H1 (cell line): ENCODE measurements at regions of chr1 and their contacts with region 1.

Region 1: DNA sequence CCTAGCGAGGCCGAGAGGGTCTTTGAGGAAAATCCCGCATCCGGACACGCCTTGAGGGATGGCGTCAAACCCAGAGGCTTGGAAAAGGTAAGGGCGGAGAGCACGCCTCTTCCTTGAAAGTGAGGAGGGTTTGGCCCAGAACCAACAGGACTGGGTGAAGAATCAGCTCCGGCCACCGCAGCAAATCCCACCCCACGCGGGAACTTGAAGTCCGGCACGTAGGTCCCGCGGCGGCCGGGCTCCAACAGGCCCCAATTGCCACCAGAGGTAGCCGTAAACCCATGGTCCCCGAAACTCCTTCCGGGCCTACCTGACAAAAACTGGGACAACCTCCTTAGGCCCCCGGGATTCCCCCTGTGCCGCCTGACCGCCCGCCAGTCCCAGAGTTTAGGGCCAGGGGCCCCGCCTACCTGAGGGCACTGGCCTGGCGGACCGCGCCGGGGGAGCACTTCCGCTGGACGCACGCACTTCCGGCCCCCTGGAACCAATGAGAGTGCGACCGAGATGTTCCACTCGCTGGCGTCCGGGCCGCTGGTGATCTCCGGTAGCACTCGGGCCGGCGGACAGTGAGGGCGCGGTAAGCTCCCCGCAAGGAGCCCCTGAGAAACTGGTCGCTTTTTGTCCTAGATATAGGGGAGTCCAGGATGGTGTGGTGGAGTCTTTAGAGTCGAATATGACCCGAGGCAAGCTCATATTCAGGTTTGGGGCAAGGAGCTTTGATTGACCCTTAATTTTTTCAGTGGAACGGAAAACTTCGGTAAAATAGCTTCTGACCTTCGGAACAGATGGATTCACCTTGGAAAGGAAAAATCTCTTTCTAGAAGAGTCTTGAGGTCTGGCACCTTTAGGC is at the starts of genes LZIC and NMNAT1:
- DNase-seq: peak; percentile 81 to 94
- H3K4me3 ChIP-seq: peak within 1 kb of the TSS; percentile 72 to 94 (median 88)
- H3K27ac ChIP-seq: peak within 1 kb of the TSS; percentile 76
- H3K4me1 ChIP-seq: no peaks in the 10 kb centered on the region
- H3K27me3 ChIP-seq: no peaks in the 10 kb centered on the region
- CTCF ChIP-seq: peak in 1 of 3 experiments; percentile 15; a peak in 1 of 4 replicates
- EP300 ChIP-seq: peak in 1 of 2 experiments; percentile 68; a peak in 1 of 3 replicates
- POLR2A ChIP-seq: peak; percentile 73 to 94
- RAD21 ChIP-seq: peak in 1 of 2 experiments; percentile 15; a peak in 1 of 4 replicates
- total RNA-seq, gene LZIC: 20.0 and 20.3 TPM in 2 replicates
- total RNA-seq, gene NMNAT1: 2.0 and 2.5 TPM in 2 replicates

Region 2: DNA sequence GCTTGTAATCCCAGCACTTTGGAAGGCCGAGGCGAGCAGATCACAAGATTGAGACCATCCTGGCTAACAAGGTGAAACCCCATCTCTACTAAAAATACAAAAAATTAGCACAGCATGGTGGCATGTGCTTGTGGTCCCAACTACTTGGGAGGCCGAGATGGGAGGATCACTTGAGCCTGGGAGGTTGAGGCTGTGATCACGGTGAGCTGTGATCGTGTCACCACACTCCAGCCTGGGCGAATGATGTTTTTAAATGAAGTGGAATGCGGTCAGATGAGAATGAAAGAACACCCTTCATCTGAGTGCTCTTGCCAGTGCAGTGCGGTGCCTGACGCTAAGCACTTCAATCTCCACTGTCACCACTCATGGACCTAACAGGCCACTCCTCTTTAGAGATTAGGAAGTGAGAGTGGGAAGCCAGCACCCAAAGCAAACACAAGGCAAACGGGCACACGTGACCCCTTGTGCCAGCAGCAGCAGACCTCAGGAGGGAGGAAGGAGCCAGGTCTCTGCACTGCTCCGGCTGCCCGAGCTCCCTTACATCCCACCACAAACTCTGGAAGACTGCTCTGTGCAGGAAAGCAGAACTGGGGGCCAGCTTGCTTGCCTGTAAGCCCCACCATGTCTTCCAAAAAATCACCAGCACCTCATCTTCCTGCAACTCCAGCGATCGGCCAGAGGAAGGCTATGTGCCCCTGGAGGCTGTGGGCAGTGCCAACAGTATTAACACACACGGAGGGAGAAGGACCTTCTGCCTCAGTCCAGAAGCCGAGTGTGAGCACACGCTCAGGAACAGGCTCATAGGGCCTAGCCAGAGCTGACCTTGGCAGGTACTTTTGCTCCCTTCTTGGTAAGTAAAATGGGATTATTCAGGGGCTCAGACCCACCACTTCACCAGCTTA is 42.8 kb before region 1 on chr1:
- CTCF ChIA-PET with region 1: interaction called, 10 read pairs
- POLR2A ChIA-PET with region 1: interaction called, 5 read pairs
- DNase-seq: no peak
- H3K4me3 ChIP-seq: no peak overlapping the region
- H3K27ac ChIP-seq: no peak overlapping the region
- H3K4me1 ChIP-seq: no peaks in the 10 kb centered on the region; a peak in 1 of 7 replicates
- H3K27me3 ChIP-seq: no peaks in the 10 kb centered on the region
- CTCF ChIP-seq: no peak
- EP300 ChIP-seq: no peak
- POLR2A ChIP-seq: no peak
- RAD21 ChIP-seq: no peak

Region 3: GRCh38 chr1:9910425-9911178 is 32.6 kb before region 1 on chr1:
- CTCF ChIA-PET with region 1: interaction called, 7 read pairs
- POLR2A ChIA-PET with region 1: interaction called, 12 read pairs
- DNase-seq: peak; percentile 96 to 100
- H3K4me3 ChIP-seq: peak overlapping the region; percentile 56 to 80 (median 78)
- H3K27ac ChIP-seq: peak overlapping the region; percentile 60
- H3K4me1 ChIP-seq: peaks cover 2 to 6% (median 4%) of the 10 kb centered on the region in 4 experiments; a peak in 4 of 7 replicates
- H3K27me3 ChIP-seq: no peaks in the 10 kb centered on the region
- CTCF ChIP-seq: no peak
- EP300 ChIP-seq: no peak
- POLR2A ChIP-seq: peak; percentile 51 to 74
- RAD21 ChIP-seq: no peak

Region 4: GRCh38 chr1:10032590-10033358 is 89.6 kb after region 1 on chr1 and contains the start of gene UBE4B:
- CTCF ChIA-PET with region 1: interaction called, 7 read pairs
- POLR2A ChIA-PET with region 1: interaction called, 10 read pairs
- DNase-seq: peak; percentile 95 to 99
- H3K4me3 ChIP-seq: peak within 1 kb of the TSS; percentile 85 to 99 (median 94)
- H3K27ac ChIP-seq: peak within 1 kb of the TSS; percentile 89
- H3K4me1 ChIP-seq: peaks cover 0 to 3% (median 0%) of the 10 kb centered on the region in 4 experiments; a peak in 2 of 7 replicates
- H3K27me3 ChIP-seq: no peaks in the 10 kb centered on the region
- CTCF ChIP-seq: peak; percentile 83 to 89 (median 86)
- EP300 ChIP-seq: no peak
- POLR2A ChIP-seq: peak; percentile 68 to 87
- RAD21 ChIP-seq: peak; percentile 72 to 74
- total RNA-seq, gene UBE4B: 90.1 and 91.0 TPM in 2 replicates